Activated naive CD4-positive, alpha-beta T cell treated with anti-CD3 and anti-CD28 coated beads for 36 hours (primary cell): ENCODE measurements at regions of chr18 and their contacts with region 1.

Region 1: DNA sequence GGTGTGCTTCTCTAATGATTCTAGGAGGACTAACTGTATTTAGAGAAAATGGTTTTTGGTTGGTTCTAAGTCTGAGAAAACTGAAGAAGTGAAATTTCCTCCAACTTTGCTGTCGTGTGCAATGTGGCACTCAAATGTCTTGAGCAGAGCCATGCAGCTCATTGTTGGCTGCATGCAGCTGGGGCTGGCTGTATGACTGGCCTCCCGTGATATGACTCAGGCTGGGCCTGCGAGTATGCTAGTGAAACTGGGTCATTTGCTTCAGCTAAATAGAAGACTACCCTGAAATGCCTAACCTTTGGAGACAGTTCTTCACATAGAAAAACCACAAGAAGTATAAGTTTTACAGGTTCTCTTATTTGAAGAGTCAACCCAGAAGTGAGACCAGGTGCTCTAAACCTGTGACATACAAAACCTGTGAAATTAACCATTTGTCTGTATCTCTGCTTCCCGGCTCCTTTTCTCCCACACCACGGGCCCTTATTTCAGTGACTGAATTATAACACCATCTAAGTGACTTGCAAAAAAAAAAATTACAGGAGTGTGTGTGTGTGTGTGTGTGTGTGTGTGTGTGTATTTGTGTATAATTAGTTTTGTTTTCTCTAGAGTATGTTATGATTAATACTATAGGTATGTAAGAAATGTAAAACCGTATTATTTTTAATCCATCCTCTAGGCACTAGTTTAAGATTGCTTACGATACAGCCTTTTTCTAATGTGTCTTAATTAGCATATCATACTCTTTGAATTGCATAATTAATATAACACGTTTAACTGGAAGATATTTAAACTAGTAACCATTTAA is 15.9 kb downstream of the POLI start:
- DNase-seq: peak; percentile 86
- H3K4me3 Mint-ChIP-seq: no peak overlapping the region
- H3K27ac Mint-ChIP-seq: peak overlapping the region; percentile 17
- H3K4me1 Mint-ChIP-seq: peaks cover 18% of the 10 kb centered on the region
- H3K27me3 Mint-ChIP-seq: no peaks in the 10 kb centered on the region

Region 2: DNA sequence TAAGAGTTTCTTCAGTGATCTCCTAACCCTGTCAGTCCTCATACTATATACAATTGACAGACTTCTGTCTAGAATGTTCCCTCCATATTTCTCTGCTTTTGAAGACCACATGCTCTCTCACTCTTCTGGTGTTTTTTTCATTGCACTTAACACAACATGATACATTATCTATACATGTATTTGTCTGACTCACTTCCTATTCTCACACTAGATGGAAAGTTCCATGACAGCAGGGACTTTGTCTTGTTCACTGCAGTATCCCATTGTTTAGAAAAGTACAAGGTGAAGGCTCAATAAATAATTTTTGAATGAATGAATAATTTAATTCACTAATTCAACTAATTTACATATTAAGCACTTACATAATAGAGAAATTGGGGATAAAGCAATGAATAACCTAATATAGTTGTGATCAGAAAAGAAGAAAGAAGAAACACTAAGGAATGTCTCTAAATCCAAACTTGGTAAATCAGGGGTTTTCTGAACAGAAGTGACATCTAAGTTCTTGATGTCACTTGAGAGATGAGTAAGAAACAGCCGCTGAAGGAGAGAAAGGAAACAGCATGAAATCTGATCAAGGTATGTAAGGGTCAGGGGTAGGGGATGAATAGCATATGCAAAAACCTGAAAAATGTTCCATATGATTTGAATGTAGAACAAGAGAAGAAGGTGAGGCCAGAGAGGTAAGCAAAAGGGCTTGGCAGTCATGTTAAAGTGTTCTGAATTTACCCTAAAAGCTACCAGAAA is 103.2 kb before region 1 on chr18:
- CTCF ChIA-PET with region 1: interaction called, 6 read pairs
- intact Hi-C with region 1: loop called (anchors 1 kb)
- DNase-seq: peak; percentile 20
- H3K4me3 Mint-ChIP-seq: no peak overlapping the region
- H3K27ac Mint-ChIP-seq: no peak overlapping the region
- H3K4me1 Mint-ChIP-seq: peaks cover 9% of the 10 kb centered on the region
- H3K27me3 Mint-ChIP-seq: no peaks in the 10 kb centered on the region

Region 3: DNA sequence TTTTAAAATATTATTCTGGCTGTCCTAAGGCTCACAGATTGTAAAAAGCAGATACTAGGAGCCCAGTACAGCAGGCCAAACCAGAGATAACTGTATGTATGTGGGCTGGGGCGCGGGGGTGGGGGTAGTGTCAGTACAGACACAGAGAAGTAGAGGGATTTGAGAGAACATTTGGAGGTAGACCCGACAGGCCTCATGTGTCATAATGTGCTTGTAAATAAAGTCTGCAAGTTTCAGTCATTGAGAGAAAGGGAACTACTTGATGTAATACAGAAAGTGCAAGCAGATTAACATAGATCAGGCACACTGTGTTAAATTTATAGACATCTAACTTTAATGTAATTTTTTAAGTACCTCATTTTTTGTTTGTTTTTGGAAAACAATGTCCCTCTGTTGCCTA is 23.3 kb before region 1 on chr18:
- CTCF ChIA-PET with region 1: interaction called, 4 read pairs
- intact Hi-C with region 1: loop called (anchors 1 kb)
- DNase-seq: peak; percentile 79
- H3K4me3 Mint-ChIP-seq: no peak overlapping the region
- H3K27ac Mint-ChIP-seq: peak overlapping the region; percentile 77
- H3K4me1 Mint-ChIP-seq: peaks cover 42% of the 10 kb centered on the region
- H3K27me3 Mint-ChIP-seq: no peaks in the 10 kb centered on the region

Region 4: DNA sequence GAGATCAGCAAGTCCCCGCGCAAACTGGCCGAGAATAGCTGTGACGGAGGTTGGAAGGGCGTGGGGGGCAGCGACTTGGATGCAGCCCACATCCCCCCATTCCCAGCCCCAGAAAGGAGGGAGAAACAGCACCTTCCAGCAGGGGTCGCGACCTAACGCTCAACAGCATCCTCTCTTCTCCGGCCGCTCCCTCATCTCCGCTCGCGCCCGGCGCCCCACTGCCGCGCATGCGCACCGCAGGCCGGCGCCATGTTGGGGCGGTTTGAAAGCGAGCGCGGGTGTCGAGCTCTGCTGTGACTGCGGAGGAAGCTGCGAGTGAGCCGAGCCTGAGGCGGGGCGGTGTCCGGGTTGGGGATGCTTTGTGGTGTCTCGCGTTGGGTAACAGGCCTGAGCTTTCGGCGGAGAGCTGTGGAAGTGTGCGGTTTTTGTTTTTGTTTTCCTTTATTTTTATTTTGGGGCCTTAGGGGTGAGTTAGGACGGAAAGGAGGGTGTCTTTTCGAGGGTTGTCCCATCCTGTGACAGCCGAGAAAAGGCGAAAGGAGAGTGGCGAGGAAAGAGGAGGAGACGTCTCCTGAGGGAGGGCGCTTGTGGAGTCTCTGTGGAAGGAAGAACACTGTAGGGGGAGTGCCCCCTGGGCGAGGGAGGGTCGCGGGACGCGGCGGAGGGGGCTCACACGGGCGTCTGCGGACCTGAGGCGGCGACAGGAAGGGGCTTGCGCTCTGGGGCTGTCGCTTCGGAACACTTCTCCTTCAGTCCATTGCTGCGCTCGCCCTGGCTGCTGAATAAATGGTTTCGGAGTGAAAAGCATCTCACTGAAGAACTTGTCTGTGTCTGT is 72.7 kb after region 1 on chr18 and contains the starts of genes C18orf54 and STARD6:
- CTCF ChIA-PET with region 1: no interaction called
- intact Hi-C with region 1: loop called (anchors 1 kb)
- DNase-seq: peak; percentile 89
- H3K4me3 Mint-ChIP-seq: peak within 1 kb of the TSS; percentile 100
- H3K27ac Mint-ChIP-seq: peak within 1 kb of the TSS; percentile 95
- H3K4me1 Mint-ChIP-seq: peaks cover 12% of the 10 kb centered on the region
- H3K27me3 Mint-ChIP-seq: peaks cover 5% of the 10 kb centered on the region
- total RNA-seq, gene C18orf54: 10.2 to 11.5 TPM
- total RNA-seq, gene STARD6: not detected